HEK293 (cell line): ENCODE measurements at regions of chr17 and their contacts with region 1.

Region 1: GRCh38 chr17:48593840-48594537 is 410 bp upstream of the HOXB5 start:
- H3K4me3 ChIP-seq: no peak overlapping the region; the same call in 1 of the 2 replicates
- H3K27ac ChIP-seq: peak overlapping the region; percentile 68
- H3K4me1 ChIP-seq: peaks cover 31% of the 10 kb centered on the region
- CTCF ChIP-seq: peak; percentile 98

Region 2: GRCh38 chr17:48351831-48352332 is 242.1 kb before region 1 on chr17:
- CTCF ChIA-PET with region 1: interaction called, 19 read pairs
- POLR2A ChIA-PET with region 1: no interaction called
- H3K4me3 ChIP-seq: no peak overlapping the region
- H3K27ac ChIP-seq: no peak overlapping the region
- H3K4me1 ChIP-seq: peaks cover 3% of the 10 kb centered on the region; the same call in 1 of the 2 replicates
- CTCF ChIP-seq: no peak

Region 3: DNA sequence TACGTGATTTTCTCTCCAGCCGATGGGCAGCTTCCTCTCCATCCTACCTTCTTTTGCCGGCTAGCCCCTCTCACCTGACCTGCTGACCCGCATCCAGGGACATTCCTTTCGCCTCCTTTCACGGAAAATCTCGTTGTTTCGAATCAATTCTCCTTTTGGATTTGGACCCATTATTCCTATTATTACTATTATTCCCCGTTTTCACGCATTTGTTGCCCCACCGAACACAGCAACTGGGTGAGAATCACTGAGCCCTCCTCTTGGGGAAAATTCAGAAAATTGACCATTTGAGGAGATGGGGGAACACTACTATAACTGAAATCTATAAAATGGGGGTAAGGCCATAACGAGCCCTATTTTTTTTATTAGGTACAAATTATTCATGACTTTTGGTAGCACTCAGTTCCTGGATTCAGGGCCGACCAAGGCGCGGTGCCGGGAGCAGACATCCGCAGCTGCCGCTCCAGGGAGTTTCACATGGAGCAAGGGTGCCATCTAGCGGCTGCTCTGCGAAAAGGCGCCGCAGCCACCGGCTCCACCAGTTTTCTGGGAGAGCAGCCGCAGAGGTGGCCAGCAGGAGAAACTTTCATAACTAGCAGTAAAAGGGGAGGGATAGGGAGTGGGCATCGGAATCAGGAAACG is 24.4 kb after region 1 on chr17:
- CTCF ChIA-PET with region 1: interaction called, 21 read pairs
- POLR2A ChIA-PET with region 1: interaction called, 3 read pairs
- H3K4me3 ChIP-seq: no peak overlapping the region
- H3K27ac ChIP-seq: peak overlapping the region; percentile 44; the same call in 1 of the 2 replicates
- H3K4me1 ChIP-seq: peaks cover 48% of the 10 kb centered on the region
- CTCF ChIP-seq: peak; percentile 96

Region 4: DNA sequence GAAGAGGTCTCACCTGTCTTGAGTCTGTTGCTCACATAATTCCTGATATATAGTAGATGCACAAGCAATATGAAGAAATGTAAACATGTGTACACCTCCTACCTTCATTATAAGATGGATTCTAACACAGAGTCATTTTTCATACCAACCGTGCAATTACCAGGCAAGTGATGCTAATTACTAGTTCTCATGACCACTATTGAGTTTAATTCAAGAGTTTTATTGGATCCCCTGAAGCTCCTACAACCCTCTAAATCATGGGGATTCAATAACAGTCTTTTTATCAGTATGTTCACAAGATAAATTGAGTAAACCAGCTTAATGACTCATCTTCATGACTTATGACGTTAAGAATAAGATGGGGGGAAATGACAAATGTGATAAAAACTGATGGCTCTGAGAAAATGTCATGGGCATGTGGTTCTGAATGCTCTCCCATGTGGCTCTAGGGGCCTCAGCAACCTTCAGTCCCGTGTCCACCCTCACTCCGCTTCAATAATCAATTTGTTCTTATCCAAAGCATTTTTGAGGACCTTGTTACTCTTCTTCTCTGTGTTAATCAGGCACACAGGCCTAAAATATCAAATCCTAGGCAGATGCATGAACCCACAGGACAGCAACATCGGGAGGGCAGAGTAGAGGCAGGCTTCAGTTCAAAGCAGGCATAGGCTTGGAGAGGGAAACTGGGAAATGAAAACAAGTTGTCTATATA is 85.6 kb after region 1 on chr17:
- CTCF ChIA-PET with region 1: no interaction called
- POLR2A ChIA-PET with region 1: no interaction called
- H3K4me3 ChIP-seq: no peak overlapping the region
- H3K27ac ChIP-seq: no peak overlapping the region
- H3K4me1 ChIP-seq: no peaks in the 10 kb centered on the region
- CTCF ChIP-seq: no peak